ENCODE measurements at regions of chr1 and their contacts with region 1.

Region 1: DNA sequence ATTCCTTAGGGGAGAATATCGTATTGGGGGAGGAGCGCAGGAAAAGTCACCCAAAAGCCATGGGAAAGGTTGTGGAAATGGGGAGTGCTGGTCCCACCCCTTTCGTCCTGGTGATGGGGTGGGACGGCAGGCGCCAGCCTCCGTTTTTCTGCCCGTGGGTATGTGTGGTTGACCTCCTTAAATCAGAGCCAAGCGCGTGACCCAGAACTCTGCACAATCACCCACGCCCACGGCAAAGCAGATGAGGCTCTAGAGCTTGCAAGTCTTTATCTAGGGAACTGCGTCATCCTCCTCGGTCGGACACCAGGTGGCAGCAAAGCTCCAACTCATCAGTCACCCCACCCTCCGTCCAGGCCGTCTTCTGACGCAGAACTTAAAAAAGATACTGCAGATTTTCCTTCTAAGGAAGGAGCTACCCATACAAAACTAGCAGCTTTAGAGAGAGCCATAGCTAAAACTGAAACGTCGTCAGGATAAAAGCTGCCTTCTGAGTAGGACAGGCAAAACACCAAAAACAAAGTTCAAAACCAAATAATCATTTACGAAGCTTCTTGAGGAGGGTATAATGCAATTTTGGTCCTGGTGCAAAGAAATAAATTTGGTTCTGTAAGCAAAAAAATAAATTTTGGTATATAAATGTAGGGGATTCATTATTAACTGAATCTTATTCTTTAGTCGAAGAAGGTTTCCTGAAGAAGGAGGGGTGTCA is 62.0 kb downstream of the TBX19 start:
- DNase-seq: peak; percentile 79
- H3K4me3 Mint-ChIP-seq: no peak overlapping the region
- H3K27ac Mint-ChIP-seq: peak overlapping the region; percentile 14
- H3K4me1 Mint-ChIP-seq: peaks cover 64% of the 10 kb centered on the region
- H3K27me3 Mint-ChIP-seq: peaks cover 7% of the 10 kb centered on the region

Region 2: GRCh38 chr1:168225476-168226190 is 117.1 kb before region 1 on chr1 and contains the start of gene SFT2D2:
- intact Hi-C with region 1: loop called (anchors 2 kb)
- DNase-seq: peak; percentile 77
- H3K4me3 Mint-ChIP-seq: peak within 1 kb of the TSS; percentile 90
- H3K27ac Mint-ChIP-seq: peak within 1 kb of the TSS; percentile 87
- H3K4me1 Mint-ChIP-seq: peaks cover 61% of the 10 kb centered on the region
- H3K27me3 Mint-ChIP-seq: peaks cover 4% of the 10 kb centered on the region
- total RNA-seq, gene SFT2D2: 71.1 and 76.5 TPM in 2 replicates

Region 3: DNA sequence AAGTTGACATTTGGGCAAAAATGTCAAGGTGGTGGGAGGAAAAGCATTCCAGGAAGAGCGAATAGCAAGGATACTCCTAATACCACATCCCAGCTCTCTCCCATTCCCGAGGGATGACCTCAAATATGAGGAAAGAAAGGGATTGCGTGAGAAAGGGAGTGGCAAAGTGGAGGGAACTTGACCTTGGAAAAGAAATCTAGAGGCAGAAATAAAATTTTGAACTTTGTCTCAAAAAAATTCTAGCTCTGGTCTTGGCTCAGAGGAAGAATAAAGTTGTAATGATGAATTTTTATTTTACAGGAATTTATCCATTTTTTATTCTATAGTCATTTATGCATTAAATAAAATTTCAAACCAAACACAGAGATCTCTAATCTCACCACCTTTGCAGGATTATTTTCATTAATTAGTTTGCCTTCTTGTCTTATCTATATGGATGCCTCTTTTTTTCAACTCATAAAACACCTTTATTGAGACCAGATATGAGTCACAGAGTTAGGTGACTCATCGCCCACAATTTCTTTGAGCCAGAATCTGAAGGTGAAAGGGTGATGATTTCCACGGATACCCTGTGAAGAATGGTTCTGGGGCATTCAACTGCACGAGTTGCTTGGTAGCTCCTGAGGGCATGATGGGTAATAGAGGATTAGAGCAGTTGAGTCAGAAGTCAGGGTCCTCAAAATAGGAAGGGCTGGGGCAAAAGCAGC is 66.0 kb after region 1 on chr1:
- intact Hi-C with region 1: loop called (anchors 1 kb)
- DNase-seq: peak; percentile 64
- H3K4me3 Mint-ChIP-seq: peak overlapping the region; percentile 24
- H3K27ac Mint-ChIP-seq: peak overlapping the region; percentile 86
- H3K4me1 Mint-ChIP-seq: peaks cover 42% of the 10 kb centered on the region
- H3K27me3 Mint-ChIP-seq: no peaks in the 10 kb centered on the region

Region 4: DNA sequence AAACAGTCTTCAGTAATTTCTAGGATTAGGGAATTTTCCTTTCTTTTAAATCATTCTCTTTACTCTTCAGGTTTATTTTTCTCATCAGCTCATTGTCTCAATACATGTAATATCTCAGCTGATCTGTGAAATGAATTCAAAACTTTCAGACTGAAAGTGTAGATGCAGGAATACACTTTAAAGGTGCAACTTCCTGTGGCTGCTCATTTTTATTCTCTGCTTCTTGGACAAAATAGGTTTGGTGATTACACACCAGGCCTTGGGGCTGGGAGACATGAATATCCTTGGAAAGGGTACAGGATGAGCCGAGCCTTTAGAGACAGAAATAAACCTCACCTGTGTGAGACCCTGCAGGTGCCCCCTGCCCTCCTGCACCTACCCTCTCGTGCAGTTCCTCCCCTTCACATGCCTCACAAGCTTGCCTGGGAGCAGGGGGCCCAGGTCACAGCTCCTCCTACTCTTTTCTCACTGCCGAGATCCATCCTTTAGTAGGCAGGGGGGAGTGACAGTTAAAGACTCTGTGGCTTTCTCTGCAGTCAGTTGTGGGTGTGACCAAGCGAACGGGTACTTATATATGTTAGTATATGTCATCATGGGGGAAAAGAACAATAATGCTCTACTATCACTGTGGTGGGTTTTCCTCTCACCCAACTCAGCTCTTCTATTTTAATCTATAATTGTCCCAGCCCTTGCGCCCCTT is 177.5 kb after region 1 on chr1:
- intact Hi-C with region 1: loop called (anchors 2 kb)
- DNase-seq: no peak
- H3K4me3 Mint-ChIP-seq: peak overlapping the region; percentile 55
- H3K27ac Mint-ChIP-seq: peak overlapping the region; percentile 81
- H3K4me1 Mint-ChIP-seq: peaks cover 57% of the 10 kb centered on the region
- H3K27me3 Mint-ChIP-seq: no peaks in the 10 kb centered on the region

Region 5: GRCh38 chr1:169138866-169139670 is 796.3 kb after region 1 on chr1:
- intact Hi-C with region 1: loop called (anchors 1 kb)
- DNase-seq: no peak
- H3K4me3 Mint-ChIP-seq: no peak overlapping the region
- H3K27ac Mint-ChIP-seq: peak overlapping the region; percentile 80
- H3K4me1 Mint-ChIP-seq: peaks cover 20% of the 10 kb centered on the region
- H3K27me3 Mint-ChIP-seq: peaks cover 4% of the 10 kb centered on the region

Region 6: DNA sequence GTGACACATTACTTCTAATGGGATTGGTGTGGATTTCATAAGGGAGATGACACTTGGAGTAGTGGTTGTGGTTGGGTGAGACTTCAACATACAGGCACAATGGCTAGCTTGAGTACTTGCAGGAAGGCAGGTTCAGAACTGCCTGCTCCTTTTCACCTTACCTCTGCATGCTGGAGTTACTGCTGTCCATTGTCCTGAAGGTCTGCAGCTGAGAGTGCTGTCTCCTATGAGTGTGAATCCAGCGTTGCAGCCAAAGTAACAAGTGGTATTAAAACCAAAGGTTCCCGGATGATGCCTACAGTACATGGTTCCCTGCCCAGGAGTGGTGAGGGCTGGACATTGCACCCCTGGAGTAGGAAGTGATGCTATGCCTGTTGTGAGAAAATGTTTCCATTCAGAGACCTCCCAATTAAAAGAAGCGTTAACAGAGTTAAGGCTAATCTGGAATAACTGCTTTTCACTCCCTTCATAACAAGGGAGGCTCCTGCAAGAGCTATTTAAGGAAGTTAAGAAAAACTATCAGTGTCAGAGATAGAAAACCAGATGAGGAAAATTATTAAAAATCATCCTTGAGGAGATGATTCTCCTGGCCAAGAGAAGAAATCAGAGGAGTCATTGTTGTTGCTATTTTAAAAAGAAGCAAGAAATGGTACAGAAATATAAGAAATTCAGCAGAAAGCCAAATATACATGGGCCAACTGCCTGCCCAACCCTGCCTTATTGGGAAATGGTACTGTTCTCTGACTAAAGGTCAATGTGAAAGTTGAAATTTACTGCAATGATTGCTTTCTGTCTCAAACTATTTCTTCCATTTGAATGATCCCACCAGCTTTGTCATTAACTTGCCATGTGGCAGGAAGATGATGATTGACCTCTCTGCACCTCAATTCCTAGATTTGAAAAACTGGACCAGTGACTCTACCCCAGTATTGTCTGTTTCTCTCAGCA is 1253.3 kb after region 1 on chr1:
- intact Hi-C with region 1: loop called (anchors 5 kb)
- DNase-seq: no peak
- H3K4me3 Mint-ChIP-seq: no peak overlapping the region
- H3K27ac Mint-ChIP-seq: no peak overlapping the region
- H3K4me1 Mint-ChIP-seq: peaks cover 59% of the 10 kb centered on the region
- H3K27me3 Mint-ChIP-seq: no peaks in the 10 kb centered on the region

Measured in activated T-helper 1 cell treated with anti-CD3 and anti-CD28 coated beads, Interleukin-12 subunit alpha, Interleukin-12 subunit beta, Interleukin-2, Interleukin-4 antibody, amounts not matched to agents 30 ng/mL and 10 ng/mL and 1 ng/mL, durations not matched to agents 14 hours and 24 hours and 36 hours (primary cell).